ENCODE measurements at regions of chrX and their contacts with region 1.

Region 1: DNA sequence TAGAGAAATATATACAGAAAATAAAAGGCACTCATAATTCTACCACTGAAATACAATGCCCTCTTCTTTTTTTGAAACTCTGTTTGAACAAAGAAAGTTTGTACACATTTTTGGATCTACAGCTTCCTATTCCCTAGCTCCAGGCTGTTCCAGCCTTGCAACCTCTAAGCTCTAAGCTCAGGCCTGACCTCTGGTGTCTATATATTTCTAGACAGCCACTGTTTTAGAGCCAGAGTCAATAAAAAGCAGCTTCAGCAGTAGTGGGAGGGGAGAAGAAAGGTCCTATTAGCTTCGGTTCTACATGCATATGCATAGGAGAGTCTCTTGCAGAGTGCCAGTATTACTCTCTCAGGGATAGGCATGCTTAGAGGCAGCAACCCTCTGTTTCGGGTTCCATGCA is 39.7 kb downstream of the CLDN2 start:
- DNase-seq: no peak
- H3K4me3 ChIP-seq: no peak overlapping the region
- H3K27ac ChIP-seq: no peak overlapping the region
- H3K27me3 ChIP-seq: no peaks in the 10 kb centered on the region
- CTCF ChIP-seq: peak; percentile 46

Region 2: DNA sequence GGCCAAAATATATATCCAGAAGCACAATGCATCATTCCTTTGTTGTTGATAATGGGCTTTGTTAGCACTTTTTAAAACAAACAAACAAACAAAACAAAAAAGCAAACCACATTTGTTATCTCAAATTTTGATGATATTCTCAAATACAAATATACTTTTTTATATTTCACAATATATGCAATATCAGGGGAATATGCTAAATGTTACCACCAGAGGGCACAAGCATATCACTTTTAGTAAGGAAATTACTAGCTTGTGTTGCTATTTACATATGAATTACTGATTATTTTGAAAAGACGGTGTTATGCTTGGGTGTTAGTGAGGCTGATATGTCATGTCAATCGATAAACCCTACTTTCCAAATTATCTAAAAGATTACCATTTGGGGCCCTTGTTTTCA is 85.8 kb before region 1 on chrX:
- CTCF ChIA-PET with region 1: interaction called, 16 read pairs
- POLR2A ChIA-PET with region 1: no interaction called
- DNase-seq: no peak
- H3K4me3 ChIP-seq: no peak overlapping the region
- H3K27ac ChIP-seq: no peak overlapping the region
- H3K27me3 ChIP-seq: no peaks in the 10 kb centered on the region
- CTCF ChIP-seq: peak; percentile 50

Region 3: GRCh38 chrX:106894392-106894909 is 65.5 kb before region 1 on chrX:
- CTCF ChIA-PET with region 1: interaction called, 47 read pairs
- POLR2A ChIA-PET with region 1: no interaction called
- DNase-seq: peak; percentile 30
- H3K4me3 ChIP-seq: no peak overlapping the region
- H3K27ac ChIP-seq: peak overlapping the region; percentile 47
- H3K27me3 ChIP-seq: no peaks in the 10 kb centered on the region
- CTCF ChIP-seq: peak; percentile 79